Esophagus squamous epithelium (tissue), 5 donors: ENCODE measurements at regions of chr16 and their contacts with region 1.

Region 1: GRCh38 chr16:56691885-56692284 is 9.6 kb downstream of the MT1X start:
- DNase-seq: no peak
- H3K4me3 ChIP-seq: no peak overlapping the region
- H3K27ac ChIP-seq: peak overlapping the region in 3 of 4 donors; percentile 55 to 67 (median 61)
- H3K4me1 ChIP-seq: peaks cover 0 to 56% (median 17%) of the 10 kb centered on the region in 3 donors
- H3K27me3 ChIP-seq: no peaks in the 10 kb centered on the region
- CTCF ChIP-seq: no peak
- POLR2A ChIP-seq: no peak

Region 2: GRCh38 chr16:56608043-56608875 is 83.6 kb before region 1 on chr16 and contains the start of gene MT2A:
- intact Hi-C with region 1: loop called (anchors 10 kb)
- DNase-seq: peak; percentile 62
- H3K4me3 ChIP-seq: peak within 1 kb of the TSS; percentile 39 to 66 (median 62)
- H3K27ac ChIP-seq: peak within 1 kb of the TSS; percentile 82 to 95 (median 90)
- H3K4me1 ChIP-seq: peaks cover 39 to 69% (median 49%) of the 10 kb centered on the region in 3 donors
- H3K27me3 ChIP-seq: no peaks in the 10 kb centered on the region
- CTCF ChIP-seq: no peak
- POLR2A ChIP-seq: peak in 3 of 4 donors; percentile 49 to 98 (median 91)
- total RNA-seq, gene MT2A: 76.5 to 157 (median 96.2) TPM

Region 3: DNA sequence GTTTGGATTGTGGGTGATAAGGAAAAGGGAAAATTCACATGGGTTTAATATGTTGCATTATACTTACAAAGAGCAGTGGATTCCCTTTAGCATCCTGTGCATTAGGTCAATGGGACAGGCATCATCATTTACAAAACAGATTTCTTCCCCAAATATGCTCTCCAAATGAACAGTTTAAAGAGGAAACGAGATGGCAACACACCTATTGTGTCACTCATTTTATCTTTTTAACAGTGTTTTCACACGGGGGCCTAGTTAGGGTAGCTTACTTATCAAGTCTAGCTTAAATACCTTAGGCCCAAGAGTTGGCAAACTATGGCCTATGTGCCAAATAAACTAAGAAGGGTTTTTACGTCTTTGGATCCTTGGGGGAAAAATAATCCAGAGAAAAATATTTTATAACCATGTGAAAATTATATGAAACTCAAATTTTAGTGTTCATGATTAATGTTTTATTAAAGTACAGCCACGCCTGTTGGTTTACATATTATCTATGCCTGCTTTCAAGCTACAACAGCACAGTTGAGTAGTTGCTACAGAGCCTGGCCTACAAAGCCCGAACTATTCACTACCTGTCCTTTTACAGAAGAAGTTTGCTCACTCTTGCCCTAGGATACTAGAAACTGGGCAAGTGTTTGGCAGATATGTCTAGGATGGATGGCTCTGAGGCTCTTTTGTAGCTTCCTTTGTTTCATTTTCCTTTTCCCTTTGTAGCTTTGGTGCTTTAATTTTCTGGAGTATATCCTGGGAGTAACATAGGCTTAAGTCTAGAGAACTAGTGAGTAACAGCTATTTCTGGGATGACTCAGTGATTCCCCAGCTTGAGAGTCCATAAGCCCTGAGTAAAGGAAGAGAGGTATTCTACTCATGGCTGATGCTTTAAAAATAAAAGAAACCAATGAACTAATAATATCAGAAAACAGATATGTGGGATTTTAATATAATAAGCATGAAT is 50.4 kb after region 1 on chr16:
- intact Hi-C with region 1: no loop called
- DNase-seq: no peak
- H3K4me3 ChIP-seq: no peak overlapping the region
- H3K27ac ChIP-seq: peak overlapping the region; percentile 36 to 70 (median 50)
- H3K4me1 ChIP-seq: peaks cover 0 to 51% (median 16%) of the 10 kb centered on the region in 3 donors
- H3K27me3 ChIP-seq: no peaks in the 10 kb centered on the region
- CTCF ChIP-seq: no peak
- POLR2A ChIP-seq: no peak